Activated CD4-positive, alpha-beta T cell treated with anti-CD3 and anti-CD28 coated beads for 36 hours (primary cell): ENCODE measurements at regions of chr15 and their contacts with region 1.

Region 1: DNA sequence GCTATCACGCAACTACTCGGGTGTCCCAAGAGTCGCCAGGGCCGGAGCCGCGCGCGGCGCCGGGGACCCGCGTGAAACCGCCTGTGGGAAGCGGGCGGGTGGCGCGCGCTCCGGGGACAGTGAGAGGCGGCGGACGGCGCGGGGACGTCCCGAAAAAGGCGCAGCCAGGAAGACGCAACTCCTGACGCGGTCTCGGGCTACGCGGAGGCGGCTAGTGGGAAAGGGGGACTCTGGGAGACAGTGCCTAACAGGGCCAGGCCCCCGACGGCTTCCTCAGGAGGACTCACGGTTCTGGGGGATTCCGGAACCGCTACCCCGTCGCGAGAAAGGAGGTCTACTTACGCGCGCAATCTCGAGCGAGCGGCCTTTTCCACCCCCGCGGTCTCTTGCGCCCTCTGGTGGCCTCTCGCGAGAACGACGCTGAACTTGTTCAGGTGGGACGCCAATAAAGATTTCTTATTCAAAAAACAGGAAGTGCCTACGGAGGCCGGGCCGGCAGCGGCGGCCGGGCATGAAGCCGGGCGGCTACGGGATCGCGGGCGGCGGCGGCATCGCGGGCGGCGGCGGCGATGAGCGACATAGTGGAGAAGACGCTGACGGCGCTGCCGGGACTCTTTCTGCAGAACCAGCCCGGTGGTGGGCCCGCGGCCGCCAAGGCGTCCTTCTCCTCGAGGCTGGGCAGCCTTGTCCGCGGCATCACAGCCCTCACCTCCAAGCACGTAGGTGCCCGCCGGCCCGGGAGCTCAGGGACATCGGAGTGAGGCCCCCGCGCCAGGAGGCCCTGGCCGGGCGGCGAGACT is at the start of gene AP4E1:
- DNase-seq: peak; percentile 96
- ATAC-seq: peak; percentile 62
- H3K4me3 Mint-ChIP-seq: peak within 1 kb of the TSS; percentile 87
- H3K27ac Mint-ChIP-seq: peak within 1 kb of the TSS; percentile 97
- H3K4me1 Mint-ChIP-seq: peaks cover 24% of the 10 kb centered on the region
- H3K27me3 Mint-ChIP-seq: no peaks in the 10 kb centered on the region
- total RNA-seq, gene AP4E1: 9.0 to 13.1 TPM

Region 2: GRCh38 chr15:50182219-50183013 is 726.0 kb before region 1 on chr15:
- CTCF ChIA-PET with region 1: interaction called, 3 read pairs
- POLR2A ChIA-PET with region 1: no interaction called
- intact Hi-C with region 1: loop called (anchors 5 to 10 kb)
- DNase-seq: peak; percentile 73
- ATAC-seq: peak; percentile 68
- H3K4me3 Mint-ChIP-seq: peak overlapping the region; percentile 85
- H3K27ac Mint-ChIP-seq: peak overlapping the region; percentile 88
- H3K4me1 Mint-ChIP-seq: peaks cover 21% of the 10 kb centered on the region
- H3K27me3 Mint-ChIP-seq: peaks cover 27% of the 10 kb centered on the region

Region 3: GRCh38 chr15:50424066-50424890 is 484.1 kb before region 1 on chr15 and contains the start of gene USP8:
- CTCF ChIA-PET with region 1: no interaction called
- POLR2A ChIA-PET with region 1: no interaction called
- intact Hi-C with region 1: loop called (anchors 1 kb)
- DNase-seq: peak; percentile 97
- ATAC-seq: peak; percentile 98
- H3K4me3 Mint-ChIP-seq: peak within 1 kb of the TSS; percentile 88
- H3K27ac Mint-ChIP-seq: peak within 1 kb of the TSS; percentile 92
- H3K4me1 Mint-ChIP-seq: peaks cover 32% of the 10 kb centered on the region
- H3K27me3 Mint-ChIP-seq: no peaks in the 10 kb centered on the region
- total RNA-seq, gene USP8: 39.8 to 45.3 TPM

Region 4: DNA sequence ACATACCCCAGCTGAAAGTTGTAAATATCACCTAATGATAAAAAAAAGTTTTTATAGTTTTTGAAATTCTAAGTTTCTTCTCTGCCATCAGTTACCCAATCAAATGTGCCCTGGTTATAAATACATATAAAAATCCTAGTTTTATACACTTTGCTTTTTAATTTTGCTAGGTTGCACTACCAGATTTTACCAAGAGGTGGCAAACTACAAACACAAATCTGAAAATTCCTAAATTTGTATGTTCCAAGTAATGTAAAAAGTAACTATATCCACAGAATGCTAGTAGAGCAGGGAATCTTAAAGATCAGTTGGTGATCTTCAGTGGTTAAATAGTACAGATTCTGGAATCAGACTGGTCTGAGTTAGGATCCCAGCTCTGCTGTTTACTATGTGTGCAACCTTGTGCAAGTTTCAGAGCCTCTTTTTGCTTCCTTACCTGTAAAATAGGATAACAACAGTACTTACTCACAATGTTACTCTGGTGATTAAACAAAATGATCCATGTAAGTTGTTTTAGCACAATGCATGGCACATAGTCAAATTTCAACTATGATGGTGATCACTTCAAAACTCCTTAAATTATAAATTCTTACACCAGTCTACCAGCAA is 232.8 kb before region 1 on chr15:
- CTCF ChIA-PET with region 1: interaction called, 8 read pairs
- POLR2A ChIA-PET with region 1: no interaction called
- intact Hi-C with region 1: loop called (anchors 1 kb)
- DNase-seq: no peak
- ATAC-seq: peak; percentile 26
- H3K4me3 Mint-ChIP-seq: no peak overlapping the region
- H3K27ac Mint-ChIP-seq: peak overlapping the region; percentile 29
- H3K4me1 Mint-ChIP-seq: peaks cover 12% of the 10 kb centered on the region
- H3K27me3 Mint-ChIP-seq: no peaks in the 10 kb centered on the region

Region 5: DNA sequence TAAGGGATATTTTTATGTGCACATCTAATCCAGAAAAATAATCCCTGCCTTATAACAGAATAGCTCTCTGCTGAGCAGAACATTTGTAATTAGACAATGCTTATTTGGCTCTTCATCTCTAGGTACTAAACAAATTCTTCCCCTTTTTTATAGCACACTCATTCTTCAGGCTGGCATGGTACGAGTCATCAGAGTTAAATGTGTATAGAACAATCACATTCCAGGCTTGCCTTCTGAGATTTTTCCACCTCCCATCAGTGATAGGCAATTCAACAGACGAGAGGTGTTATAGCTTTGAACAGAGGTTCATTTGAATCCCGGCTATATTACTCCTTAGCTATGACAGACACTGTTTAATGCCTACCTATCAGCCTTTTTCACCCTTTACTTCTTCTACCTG is 121.5 kb before region 1 on chr15:
- CTCF ChIA-PET with region 1: no interaction called
- POLR2A ChIA-PET with region 1: no interaction called
- intact Hi-C with region 1: no loop called
- DNase-seq: no peak
- ATAC-seq: no peak
- H3K4me3 Mint-ChIP-seq: no peak overlapping the region
- H3K27ac Mint-ChIP-seq: no peak overlapping the region
- H3K4me1 Mint-ChIP-seq: no peaks in the 10 kb centered on the region
- H3K27me3 Mint-ChIP-seq: no peaks in the 10 kb centered on the region

Region 6: GRCh38 chr15:50876989-50877360 is 31.4 kb before region 1 on chr15:
- CTCF ChIA-PET with region 1: interaction called, 7 read pairs
- POLR2A ChIA-PET with region 1: interaction called, 3 read pairs
- intact Hi-C with region 1: loop called (anchors 1 kb)
- DNase-seq: peak; percentile 79
- ATAC-seq: no peak
- H3K4me3 Mint-ChIP-seq: peak overlapping the region; percentile 51
- H3K27ac Mint-ChIP-seq: peak overlapping the region; percentile 62
- H3K4me1 Mint-ChIP-seq: peaks cover 50% of the 10 kb centered on the region
- H3K27me3 Mint-ChIP-seq: peaks cover 12% of the 10 kb centered on the region

Region 7: DNA sequence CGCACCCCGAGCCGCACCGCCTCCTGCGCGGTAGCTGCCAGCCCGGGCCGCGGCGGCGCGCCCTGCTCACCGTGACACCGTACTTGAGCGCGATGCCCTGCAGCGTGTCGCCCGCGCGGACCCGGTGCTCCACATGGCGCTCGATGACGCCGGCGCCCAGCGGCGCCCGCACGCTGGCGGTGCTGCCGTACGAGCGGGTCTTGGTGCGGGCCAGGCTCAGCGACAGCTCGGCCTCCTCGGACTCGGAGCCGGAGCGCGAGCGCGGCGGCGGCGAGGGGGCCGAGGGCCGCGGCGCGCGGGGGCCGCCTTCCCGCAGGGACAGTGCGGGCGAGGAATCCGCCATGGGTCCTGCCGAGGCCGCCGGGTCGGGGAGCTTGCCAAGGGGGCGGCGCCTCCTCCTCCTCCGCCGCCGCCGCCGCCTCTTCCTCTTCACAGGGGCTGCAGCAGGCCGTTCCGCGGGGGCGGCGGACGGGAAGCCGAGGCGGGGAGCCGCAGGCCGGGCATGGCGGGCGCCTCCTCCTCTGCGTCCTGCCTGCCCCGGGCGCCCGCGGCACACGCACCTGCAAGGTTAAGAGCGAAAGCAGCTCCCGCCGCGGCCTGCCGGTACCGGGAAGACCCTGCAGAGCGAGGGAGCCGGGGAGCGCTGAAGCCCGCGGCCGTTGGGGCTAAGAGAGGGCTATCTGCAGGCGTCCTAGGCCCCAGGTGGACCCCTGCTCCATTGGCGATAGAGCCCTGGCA is 829.0 kb after region 1 on chr15 and contains the start of gene LYSMD2:
- CTCF ChIA-PET with region 1: no interaction called
- POLR2A ChIA-PET with region 1: no interaction called
- intact Hi-C with region 1: loop called in 1 of 2 experiments (anchors 10 kb)
- DNase-seq: peak; percentile 81
- ATAC-seq: peak; percentile 45
- H3K4me3 Mint-ChIP-seq: peak within 1 kb of the TSS; percentile 77
- H3K27ac Mint-ChIP-seq: peak within 1 kb of the TSS; percentile 88
- H3K4me1 Mint-ChIP-seq: peaks cover 55% of the 10 kb centered on the region
- H3K27me3 Mint-ChIP-seq: no peaks in the 10 kb centered on the region
- total RNA-seq, gene LYSMD2: 19.1 to 20.1 TPM